Activated naive CD4-positive, alpha-beta T cell treated with anti-CD3 and anti-CD28 coated beads for 36 hours (primary cell): ENCODE measurements at regions of chr7 and their contacts with region 1.

Region 1: GRCh38 chr7:7182156-7183060 is at the start of gene C1GALT1:
- DNase-seq: peak; percentile 97
- H3K4me3 Mint-ChIP-seq: peak within 1 kb of the TSS; percentile 90
- H3K27ac Mint-ChIP-seq: peak within 1 kb of the TSS; percentile 98
- H3K4me1 Mint-ChIP-seq: peaks cover 19% of the 10 kb centered on the region
- H3K27me3 Mint-ChIP-seq: no peaks in the 10 kb centered on the region
- total RNA-seq, gene C1GALT1: 25.7 to 29.1 TPM

Region 2: GRCh38 chr7:6831018-6831725 is 351.2 kb before region 1 on chr7:
- CTCF ChIA-PET with region 1: no interaction called
- intact Hi-C with region 1: no loop called
- DNase-seq: no peak
- H3K4me3 Mint-ChIP-seq: no peak overlapping the region
- H3K27ac Mint-ChIP-seq: no peak overlapping the region
- H3K4me1 Mint-ChIP-seq: no peaks in the 10 kb centered on the region
- H3K27me3 Mint-ChIP-seq: peaks cover 3% of the 10 kb centered on the region

Region 3: DNA sequence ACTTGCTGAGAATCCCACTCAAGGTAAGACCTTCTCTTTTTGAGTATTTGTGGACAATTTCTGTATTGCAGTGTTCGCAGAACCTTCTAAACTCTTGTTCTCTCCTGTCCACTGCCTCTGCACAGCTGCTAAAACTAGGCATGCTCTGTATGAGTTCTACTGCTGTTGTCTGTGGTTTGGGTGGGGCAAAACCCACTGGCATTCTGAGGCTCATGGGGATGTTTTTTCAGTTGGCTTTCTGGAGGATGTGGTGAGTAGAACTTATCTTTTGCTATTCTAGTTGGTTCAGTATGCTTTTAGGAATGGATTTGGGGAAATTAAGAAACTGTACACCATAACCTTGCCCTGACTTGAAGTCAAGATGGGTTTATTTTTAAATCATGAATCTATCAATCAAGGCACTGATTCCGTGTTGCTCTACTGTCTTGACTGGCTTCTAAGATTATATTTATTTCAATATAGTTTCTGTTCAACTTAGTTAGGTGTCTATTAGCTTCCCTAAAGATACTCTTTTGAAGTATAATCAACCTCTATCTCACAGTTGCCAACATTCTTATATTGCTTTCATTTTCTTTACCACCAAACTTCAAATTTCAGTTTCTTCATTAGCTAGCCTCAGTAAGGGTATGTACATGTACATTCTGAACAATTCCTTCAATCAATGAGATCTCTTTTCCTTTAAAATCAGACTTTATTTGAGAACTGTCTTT is 25.1 kb before region 1 on chr7:
- CTCF ChIA-PET with region 1: interaction called, 3 read pairs
- intact Hi-C with region 1: loop called (anchors 1 kb)
- DNase-seq: peak; percentile 67
- H3K4me3 Mint-ChIP-seq: peak overlapping the region; percentile 61
- H3K27ac Mint-ChIP-seq: peak overlapping the region; percentile 81
- H3K4me1 Mint-ChIP-seq: peaks cover 49% of the 10 kb centered on the region
- H3K27me3 Mint-ChIP-seq: no peaks in the 10 kb centered on the region

Region 4: DNA sequence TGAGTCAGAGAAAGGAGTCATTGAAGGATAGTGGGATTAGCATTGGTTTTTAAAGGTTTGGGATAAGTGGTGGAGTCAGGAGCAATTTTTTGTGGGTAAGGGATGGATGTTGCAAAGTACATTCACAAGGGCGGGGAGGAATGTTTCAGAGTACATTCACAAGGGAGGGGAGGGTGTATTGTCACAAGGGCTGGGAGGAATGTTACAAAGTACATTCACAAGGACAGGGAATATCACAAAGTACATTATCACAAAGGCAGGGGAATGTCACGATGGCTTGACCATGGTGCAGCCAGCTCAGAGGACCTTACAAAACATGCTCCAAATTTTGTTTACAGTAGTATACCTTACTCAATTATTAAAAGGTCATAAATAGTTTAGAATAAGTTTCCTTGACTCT is 30.2 kb after region 1 on chr7:
- CTCF ChIA-PET with region 1: no interaction called
- intact Hi-C with region 1: no loop called
- DNase-seq: no peak
- H3K4me3 Mint-ChIP-seq: no peak overlapping the region
- H3K27ac Mint-ChIP-seq: no peak overlapping the region
- H3K4me1 Mint-ChIP-seq: peaks cover 30% of the 10 kb centered on the region
- H3K27me3 Mint-ChIP-seq: no peaks in the 10 kb centered on the region

Region 5: DNA sequence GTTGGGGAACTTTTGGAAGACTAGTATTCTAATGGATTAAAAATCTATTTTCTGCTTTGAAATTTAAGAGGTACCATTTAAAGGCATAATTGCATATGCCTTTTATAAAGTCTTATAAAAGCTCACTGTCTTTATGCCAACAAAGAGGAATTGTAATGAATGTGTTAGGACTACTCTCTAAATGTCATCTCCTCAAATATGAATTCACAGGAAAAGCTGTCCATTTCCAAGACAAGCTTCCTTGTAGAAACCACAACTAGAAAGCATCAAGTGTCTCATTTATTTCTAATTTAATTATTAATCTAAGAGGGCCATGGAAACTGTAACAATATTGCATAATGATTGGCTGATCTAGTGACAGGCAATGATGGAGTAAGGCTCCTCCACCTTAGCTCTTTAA is 223.1 kb after region 1 on chr7:
- CTCF ChIA-PET with region 1: no interaction called
- intact Hi-C with region 1: no loop called
- DNase-seq: no peak
- H3K4me3 Mint-ChIP-seq: no peak overlapping the region
- H3K27ac Mint-ChIP-seq: no peak overlapping the region
- H3K4me1 Mint-ChIP-seq: peaks cover 3% of the 10 kb centered on the region
- H3K27me3 Mint-ChIP-seq: peaks cover 2% of the 10 kb centered on the region

Region 6: GRCh38 chr7:7416031-7416858 is 233.8 kb after region 1 on chr7:
- CTCF ChIA-PET with region 1: no interaction called
- intact Hi-C with region 1: loop called (anchors 2 kb)
- DNase-seq: peak; percentile 22
- H3K4me3 Mint-ChIP-seq: no peak overlapping the region
- H3K27ac Mint-ChIP-seq: peak overlapping the region; percentile 22
- H3K4me1 Mint-ChIP-seq: peaks cover 5% of the 10 kb centered on the region
- H3K27me3 Mint-ChIP-seq: no peaks in the 10 kb centered on the region

Region 7: GRCh38 chr7:7640221-7641128 is 458.1 kb after region 1 on chr7 and contains the start of gene UMAD1:
- CTCF ChIA-PET with region 1: no interaction called
- intact Hi-C with region 1: loop called (anchors 1 kb)
- DNase-seq: peak; percentile 99
- H3K4me3 Mint-ChIP-seq: peak within 1 kb of the TSS; percentile 92
- H3K27ac Mint-ChIP-seq: peak within 1 kb of the TSS; percentile 98
- H3K4me1 Mint-ChIP-seq: peaks cover 41% of the 10 kb centered on the region
- H3K27me3 Mint-ChIP-seq: no peaks in the 10 kb centered on the region
- total RNA-seq, gene UMAD1: 13.8 to 14.3 TPM

Region 8: GRCh38 chr7:8042796-8043535 is 860.6 kb after region 1 on chr7:
- CTCF ChIA-PET with region 1: no interaction called
- intact Hi-C with region 1: loop called (anchors 1 kb)
- DNase-seq: no peak
- H3K4me3 Mint-ChIP-seq: no peak overlapping the region
- H3K27ac Mint-ChIP-seq: peak overlapping the region; percentile 82
- H3K4me1 Mint-ChIP-seq: peaks cover 72% of the 10 kb centered on the region
- H3K27me3 Mint-ChIP-seq: no peaks in the 10 kb centered on the region

Region 9: DNA sequence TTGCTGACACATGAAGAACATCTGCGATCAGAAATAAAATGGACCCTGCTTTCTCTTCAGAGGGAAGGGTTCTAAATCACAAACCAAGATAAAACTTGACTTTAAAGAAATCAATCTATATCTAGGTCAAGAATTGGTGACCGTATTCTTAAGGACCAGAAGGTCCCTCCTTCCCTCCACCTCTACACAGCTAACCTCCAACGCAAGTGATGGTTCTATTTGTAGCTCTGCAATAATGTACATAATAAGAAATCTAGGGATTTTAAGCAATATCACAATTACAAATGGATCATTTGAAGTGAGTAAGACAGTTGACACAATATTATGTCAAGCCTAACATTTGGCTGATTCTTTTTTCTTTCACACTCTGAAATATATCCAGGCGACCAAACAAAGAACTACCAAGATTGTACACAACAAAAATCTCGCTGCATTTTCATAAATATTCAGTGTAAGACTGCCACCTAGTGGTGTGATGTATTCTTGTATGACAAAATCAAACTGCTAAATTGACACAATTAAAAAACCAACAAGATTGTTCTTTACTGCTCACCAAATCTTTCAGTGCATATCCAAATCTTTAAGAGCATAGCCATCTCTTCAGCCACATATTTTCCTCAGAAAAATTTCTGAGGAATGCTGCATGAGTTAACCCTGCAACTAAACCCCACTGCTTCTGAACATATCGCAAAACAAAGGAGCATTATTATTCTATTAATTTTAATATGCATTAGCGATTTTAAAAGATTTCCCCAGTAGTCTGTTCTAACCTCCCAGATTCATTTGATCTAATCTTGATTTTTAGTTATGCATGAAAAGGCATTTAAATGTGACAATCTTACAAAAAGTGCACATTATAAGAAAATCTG is 1035.0 kb after region 1 on chr7:
- CTCF ChIA-PET with region 1: no interaction called
- intact Hi-C with region 1: loop called (anchors 2 kb)
- DNase-seq: peak; percentile 8
- H3K4me3 Mint-ChIP-seq: no peak overlapping the region
- H3K27ac Mint-ChIP-seq: no peak overlapping the region
- H3K4me1 Mint-ChIP-seq: peaks cover 2% of the 10 kb centered on the region
- H3K27me3 Mint-ChIP-seq: no peaks in the 10 kb centered on the region